ENCODE measurements at regions of chr6 and their contacts with region 1.

Region 1: DNA sequence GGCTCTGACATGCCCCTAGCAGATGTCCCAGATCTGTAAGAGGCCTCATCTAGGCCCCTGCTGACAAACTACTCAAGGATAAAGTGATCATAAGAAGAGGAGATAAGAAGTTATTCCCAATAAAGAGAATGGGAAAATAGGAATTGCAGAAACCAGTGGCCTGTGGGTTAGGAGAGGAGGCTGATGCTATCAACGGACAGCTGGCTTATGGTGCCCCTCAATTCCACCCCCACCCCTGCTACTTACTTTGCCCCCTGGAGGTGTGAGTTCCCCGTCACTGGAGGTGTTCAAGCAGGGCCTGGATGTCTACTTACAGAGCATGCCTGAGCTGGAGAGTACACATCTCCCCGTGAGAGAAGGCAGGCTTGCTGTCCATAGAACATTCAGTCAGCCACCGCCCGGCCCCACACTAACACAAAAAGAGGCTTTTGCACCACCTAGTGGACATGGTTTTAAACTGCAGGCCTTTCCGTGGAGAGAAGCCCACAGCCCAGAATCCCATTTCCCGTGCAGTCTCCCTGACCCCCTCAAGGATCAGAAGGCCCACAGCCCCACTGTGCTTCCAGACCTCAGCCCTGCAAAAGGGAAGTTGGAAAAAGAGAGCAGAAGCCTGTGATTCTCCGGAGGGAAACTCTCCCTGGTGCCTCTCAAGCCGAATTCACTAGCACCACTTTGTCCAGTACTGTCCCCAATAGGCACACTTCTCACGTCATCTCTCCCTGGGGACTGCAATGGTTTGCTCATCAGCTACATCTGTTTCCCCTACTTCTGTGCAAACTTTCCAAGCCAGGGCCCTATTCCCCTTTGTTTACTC is 23.8 kb upstream of the BNIP5 start:
- DNase-seq: peak; percentile 92
- ATAC-seq: peak; percentile 91

Region 2: GRCh38 chr6:36027501-36028087 is 332.9 kb before region 1 on chr6 and contains the start of gene MAPK14:
- intact Hi-C with region 1: loop called (anchors 10 kb)
- DNase-seq: peak; percentile 100
- ATAC-seq: peak; percentile 96
- total RNA-seq, gene MAPK14: 27.1 TPM

Region 3: DNA sequence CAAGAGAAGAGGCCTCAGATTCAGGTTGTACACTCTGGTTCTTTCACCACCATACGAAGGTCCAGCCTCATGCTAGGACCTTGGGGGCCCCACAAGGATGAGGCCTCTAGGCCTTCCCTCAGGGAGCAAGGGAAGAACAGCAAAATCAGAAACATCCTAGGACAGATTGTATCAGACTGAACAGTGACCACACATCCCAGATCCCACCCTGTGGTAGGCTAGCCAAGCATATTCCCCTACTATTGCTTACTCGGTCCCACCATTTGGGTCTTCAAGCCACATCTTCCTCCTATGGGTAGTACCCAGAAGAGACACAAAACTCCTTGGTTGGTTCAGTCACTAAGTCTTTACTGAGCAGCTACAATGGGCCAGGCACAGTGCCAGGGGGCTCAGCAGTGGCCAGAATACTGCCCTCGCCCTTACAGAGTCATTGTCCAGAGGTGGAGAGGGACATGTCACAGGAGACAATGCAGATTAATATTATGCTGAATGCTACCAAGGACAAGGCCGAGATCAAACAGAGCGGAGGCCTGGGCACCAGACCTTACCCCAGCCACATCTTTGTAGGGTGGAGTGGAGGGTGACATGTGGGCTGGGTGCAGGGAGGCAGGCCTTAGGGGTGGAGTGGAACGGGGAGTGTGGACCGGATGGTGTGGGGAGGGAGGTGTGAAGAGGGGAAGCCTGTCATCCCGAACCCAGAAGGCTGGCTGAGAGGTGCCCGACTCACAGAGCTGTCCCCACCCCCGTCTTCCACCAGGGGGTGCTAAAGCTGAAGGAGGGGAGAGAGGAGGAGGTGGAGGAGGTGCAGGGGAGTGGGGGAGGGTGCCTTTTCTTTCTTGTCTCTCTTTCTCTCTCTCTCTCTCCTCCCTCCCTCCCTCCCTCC is 236.9 kb before region 1 on chr6:
- intact Hi-C with region 1: loop called (anchors 2 kb)
- DNase-seq: peak; percentile 87
- ATAC-seq: peak; percentile 85

Region 4: DNA sequence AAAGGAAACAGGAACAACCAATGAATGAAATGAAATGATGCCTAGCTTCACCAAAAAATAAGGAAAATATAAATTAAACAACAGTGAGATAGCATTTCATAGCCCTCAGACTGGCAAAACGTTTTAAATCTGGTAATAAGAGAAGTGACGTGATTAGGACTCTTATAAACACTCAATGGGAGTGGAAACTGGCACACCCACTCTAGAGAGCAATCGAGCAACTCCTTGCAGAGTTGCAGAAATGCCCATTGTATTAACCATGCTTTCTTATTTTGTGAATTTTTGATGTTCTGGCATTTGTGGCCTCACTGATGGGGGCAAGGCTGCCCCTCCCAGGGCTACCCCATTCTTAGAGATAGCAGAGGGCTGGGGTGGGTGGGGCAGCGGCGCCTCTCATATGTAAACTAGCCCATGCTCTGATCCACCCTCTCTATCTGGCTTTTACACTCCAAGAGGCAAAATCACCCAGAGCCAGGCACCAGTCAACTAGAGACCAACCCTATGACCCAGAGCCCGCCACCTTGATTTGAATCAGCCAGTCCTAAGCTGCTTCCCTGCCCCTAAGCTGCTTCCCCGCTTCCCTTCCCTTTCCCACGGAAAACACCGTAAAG is 97.0 kb before region 1 on chr6:
- intact Hi-C with region 1: no loop called
- DNase-seq: no peak
- ATAC-seq: no peak

Region 5: GRCh38 chr6:36302227-36302976 is 58.0 kb before region 1 on chr6:
- intact Hi-C with region 1: loop called (anchors 1 kb)
- DNase-seq: peak; percentile 82
- ATAC-seq: peak; percentile 78

Region 6: DNA sequence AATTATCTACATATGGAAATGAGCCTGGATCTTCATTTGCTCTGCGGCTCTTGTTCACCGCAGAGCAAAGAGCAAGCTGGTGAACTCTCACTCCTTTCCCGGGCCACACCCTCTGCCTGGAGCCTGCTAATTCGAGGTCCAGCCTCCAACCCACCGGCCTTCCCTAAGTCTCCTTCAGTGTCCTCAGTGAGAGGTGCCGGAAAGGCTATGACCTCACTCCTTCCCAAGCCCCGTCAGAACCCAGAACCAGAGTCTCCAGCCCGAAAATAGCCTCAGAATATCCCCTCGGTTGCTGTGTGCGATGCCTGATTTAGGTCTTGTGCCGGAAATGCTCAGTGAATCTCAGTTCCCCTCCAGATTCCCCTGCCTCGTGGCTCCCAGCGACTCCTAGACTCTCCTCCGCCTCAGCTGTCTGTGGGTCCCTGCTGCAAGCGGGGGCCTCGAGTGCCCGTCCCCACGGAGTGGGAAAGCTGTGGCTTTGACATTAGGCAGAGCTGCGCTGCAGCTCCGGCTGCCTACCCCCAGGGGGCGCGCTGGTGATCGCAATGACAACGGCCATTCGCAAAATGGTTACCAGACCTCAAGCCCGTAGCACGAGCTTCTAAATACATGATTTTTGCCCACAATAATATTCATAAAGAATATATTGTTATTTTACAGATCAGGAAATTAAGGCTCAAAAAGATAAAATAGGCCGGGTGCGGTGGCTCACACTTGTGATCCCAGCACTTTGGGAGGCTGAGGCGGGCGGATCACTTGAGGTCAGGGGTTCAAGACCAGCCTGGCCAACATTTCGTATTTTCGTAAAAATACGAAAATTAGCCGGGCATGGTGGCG is 19.6 kb before region 1 on chr6:
- intact Hi-C with region 1: loop called (anchors 1 kb)
- DNase-seq: peak; percentile 89
- ATAC-seq: peak; percentile 75